HepG2 (cell line): ENCODE measurements at regions of chr1 and their contacts with region 1.

Region 1: DNA sequence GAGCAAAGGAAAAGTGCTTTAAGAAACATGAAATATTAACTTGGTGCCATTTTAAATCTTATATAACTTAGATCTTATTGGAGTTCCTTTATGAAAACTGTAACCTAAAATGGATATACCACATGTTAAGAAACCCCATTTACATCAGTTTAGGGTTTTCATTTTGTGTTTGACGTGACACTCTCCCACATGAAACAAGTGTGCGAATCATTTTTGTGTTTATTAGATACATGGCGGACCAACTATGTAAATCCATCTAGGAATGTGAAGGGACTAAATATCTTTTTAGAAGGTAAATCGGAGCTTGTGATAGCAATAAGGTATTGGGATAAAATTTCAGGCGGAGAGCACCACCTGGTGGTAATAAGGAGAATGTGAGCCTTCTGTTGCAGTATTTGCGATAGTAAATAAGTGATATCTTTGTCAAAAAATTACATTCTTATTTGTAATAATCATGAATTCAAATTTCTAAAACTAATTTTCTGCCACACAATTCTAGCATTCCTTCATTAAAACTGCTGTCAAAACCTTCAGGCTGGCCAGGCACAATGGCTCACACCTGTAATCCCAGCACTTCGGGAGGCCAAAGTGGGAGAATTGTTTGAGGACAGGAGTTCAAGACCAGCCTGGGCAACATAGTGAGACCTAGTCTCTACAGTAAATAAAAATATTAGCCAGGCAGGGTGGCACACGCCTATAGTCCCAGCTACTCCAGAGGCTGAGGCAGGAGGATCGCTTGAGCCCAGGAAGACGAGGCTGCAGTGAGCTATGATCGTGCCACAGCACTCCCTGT is 31.3 kb downstream of the SMAP2 start:
- DNase-seq: peak; percentile 60
- ATAC-seq: peak; percentile 48; the same call in 1 of the 3 replicates
- H3K4me3 ChIP-seq: no peak overlapping the region
- H3K27ac ChIP-seq: no peak overlapping the region
- H3K4me1 ChIP-seq: peaks cover 18% of the 10 kb centered on the region
- H3K27me3 ChIP-seq: no peaks in the 10 kb centered on the region
- CTCF ChIP-seq: peak; percentile 78
- EP300 ChIP-seq: no peak
- POLR2A ChIP-seq: no peak
- RAD21 ChIP-seq: peak; percentile 76

Region 2: DNA sequence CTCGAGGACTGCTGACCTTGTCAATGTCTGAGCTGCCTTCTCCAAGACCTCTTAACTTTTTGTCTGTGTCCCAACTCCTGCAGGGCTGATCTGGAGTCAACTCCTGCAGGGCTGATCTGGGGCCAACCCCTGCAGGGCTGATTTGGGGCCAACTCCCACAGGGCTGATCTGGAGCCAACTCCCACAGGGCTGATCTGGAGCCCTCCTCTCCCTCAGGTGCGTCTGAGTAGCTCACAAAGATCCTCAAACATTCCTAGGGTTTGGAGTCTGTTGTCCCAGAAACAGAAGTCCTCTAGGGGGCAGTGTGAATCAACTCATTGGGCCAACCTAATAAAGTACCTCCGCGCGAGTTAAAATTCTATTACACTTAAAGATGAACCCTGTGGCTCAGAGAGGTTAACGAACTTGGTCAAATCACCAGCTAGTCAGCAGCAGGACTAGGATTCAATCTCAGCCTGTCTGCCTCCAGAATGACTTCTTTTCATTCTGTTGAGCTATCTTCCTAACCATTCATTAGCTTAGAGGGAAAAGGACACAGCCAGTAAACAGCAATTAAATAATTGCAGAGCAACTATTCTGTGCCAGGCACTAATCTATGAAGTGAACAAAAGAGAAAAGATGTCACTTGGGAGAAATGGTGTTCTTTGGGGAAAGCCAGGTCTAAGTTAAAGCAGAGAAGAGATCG is 260.8 kb before region 1 on chr1:
- CTCF ChIA-PET with region 1: interaction called, 8 read pairs
- POLR2A ChIA-PET with region 1: no interaction called
- in situ Hi-C with region 1: loop called (anchors 10 kb)
- intact Hi-C with region 1: loop called (anchors 10 kb)
- DNase-seq: peak; percentile 64
- ATAC-seq: peak; percentile 95
- H3K4me3 ChIP-seq: no peak overlapping the region
- H3K27ac ChIP-seq: no peak overlapping the region
- H3K4me1 ChIP-seq: peaks cover 19% of the 10 kb centered on the region
- H3K27me3 ChIP-seq: peaks cover 0 to 10% of the 10 kb centered on the region in 2 experiments; a peak in 2 of 5 replicates
- CTCF ChIP-seq: peak; percentile 82
- EP300 ChIP-seq: no peak
- POLR2A ChIP-seq: no peak
- RAD21 ChIP-seq: peak; percentile 65

Region 3: GRCh38 chr1:40344597-40344996 is 60.3 kb before region 1 on chr1:
- CTCF ChIA-PET with region 1: no interaction called
- POLR2A ChIA-PET with region 1: no interaction called
- in situ Hi-C with region 1: loop called (anchors 5 kb)
- intact Hi-C with region 1: loop called (anchors 1 kb)
- DNase-seq: peak; percentile 43
- ATAC-seq: peak; percentile 90
- H3K4me3 ChIP-seq: no peak overlapping the region; a peak in 1 of 6 replicates
- H3K27ac ChIP-seq: no peak overlapping the region
- H3K4me1 ChIP-seq: peaks cover 47% of the 10 kb centered on the region
- H3K27me3 ChIP-seq: no peaks in the 10 kb centered on the region
- CTCF ChIP-seq: peak; percentile 35
- EP300 ChIP-seq: no peak
- POLR2A ChIP-seq: no peak
- RAD21 ChIP-seq: no peak